Activated CD8-positive, alpha-beta memory T cell treated with anti-CD3 and anti-CD28 coated beads, Interleukin-2, amount 10 ng/mL, durations not matched to agents 7 days and 5 days (primary cell): ENCODE measurements at regions of chr13 and their contacts with region 1.

Region 1: GRCh38 chr13:26971990-26972887 is 199.4 kb downstream of the USP12 start:
- DNase-seq: peak; percentile 57
- ATAC-seq: peak; percentile 78
- H3K4me3 Mint-ChIP-seq: no peak overlapping the region
- H3K27ac Mint-ChIP-seq: no peak overlapping the region
- H3K4me1 Mint-ChIP-seq: peaks cover 5% of the 10 kb centered on the region
- H3K27me3 Mint-ChIP-seq: peaks cover 3% of the 10 kb centered on the region

Region 2: DNA sequence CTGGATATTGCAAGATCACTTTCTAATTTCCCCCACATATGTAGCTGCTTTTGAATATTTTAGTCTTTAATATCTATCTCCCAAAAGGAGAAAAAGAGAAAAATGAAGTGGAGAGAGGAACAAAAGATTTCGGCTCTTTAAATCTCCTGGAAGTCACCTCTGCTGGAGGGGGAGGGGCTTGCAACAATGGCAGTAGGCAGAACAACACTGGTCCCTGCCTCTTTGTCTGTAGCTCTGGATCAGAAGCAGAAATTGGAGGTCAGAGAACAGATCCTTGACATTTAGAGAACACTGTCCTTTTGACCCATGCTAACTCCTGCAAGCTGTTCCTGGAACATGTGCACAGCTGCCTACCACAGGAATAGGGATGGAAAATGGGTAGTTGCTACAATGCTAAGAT is 125.0 kb before region 1 on chr13:
- CTCF ChIA-PET with region 1: no interaction called
- DNase-seq: no peak
- ATAC-seq: no peak
- H3K4me3 Mint-ChIP-seq: no peak overlapping the region
- H3K27ac Mint-ChIP-seq: no peak overlapping the region
- H3K4me1 Mint-ChIP-seq: no peaks in the 10 kb centered on the region
- H3K27me3 Mint-ChIP-seq: peaks cover 28% of the 10 kb centered on the region

Region 3: DNA sequence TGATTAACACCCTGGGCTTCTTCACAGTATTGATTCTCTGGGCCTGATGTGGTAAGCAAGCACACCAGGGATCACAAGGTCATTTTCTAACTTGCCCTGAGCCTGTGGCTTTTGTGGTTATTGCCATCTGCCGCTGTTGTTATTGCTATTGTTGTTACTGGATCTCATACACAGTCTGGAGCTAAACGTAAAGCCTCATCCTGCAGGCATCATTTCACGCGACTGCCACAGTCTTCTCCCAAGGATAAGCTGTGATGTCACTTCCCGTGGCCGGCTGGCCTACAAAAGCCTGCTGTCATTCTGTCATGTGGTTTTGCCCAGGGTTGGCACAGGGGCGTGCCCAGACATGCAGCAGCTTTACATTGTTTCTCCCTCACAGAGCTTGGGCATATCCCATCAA is 57.6 kb before region 1 on chr13:
- CTCF ChIA-PET with region 1: no interaction called
- DNase-seq: peak; percentile 53
- ATAC-seq: peak; percentile 30
- H3K4me3 Mint-ChIP-seq: no peak overlapping the region
- H3K27ac Mint-ChIP-seq: no peak overlapping the region
- H3K4me1 Mint-ChIP-seq: peaks cover 12% of the 10 kb centered on the region
- H3K27me3 Mint-ChIP-seq: peaks cover 22% of the 10 kb centered on the region

Region 4: DNA sequence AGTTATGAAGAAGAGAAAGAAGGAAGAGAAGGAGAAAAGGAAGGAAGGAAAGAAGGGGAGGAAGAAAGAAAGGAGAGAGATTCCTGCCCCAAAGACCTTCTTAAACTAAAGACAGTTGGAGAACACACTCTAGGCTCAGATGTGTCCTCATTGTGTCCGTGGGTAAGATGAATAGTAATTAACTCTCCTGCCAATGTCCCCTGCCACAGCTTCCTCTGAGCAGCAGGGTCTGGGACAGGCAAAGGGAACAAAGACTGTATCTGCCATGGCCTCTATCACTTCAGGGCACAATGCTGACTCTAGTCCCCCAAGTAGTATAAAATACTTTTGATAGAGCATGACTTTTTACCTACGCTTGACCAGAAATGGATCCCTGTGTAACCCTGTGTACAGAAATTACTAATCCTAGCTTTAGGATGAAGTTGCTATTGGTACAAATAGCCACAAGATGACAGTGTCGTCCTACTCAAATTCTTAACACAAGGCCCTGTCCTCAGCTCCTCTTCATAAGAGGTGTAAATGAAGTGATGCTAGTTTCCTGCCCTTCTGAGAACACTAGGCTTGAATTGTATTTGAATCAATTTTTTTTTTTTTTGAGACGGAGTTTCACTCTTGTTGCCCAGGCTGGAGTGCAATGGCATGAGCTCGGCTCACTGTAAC is 25.4 kb before region 1 on chr13:
- CTCF ChIA-PET with region 1: interaction called, 11 read pairs
- DNase-seq: no peak
- ATAC-seq: peak; percentile 78
- H3K4me3 Mint-ChIP-seq: no peak overlapping the region
- H3K27ac Mint-ChIP-seq: no peak overlapping the region
- H3K4me1 Mint-ChIP-seq: peaks cover 9% of the 10 kb centered on the region
- H3K27me3 Mint-ChIP-seq: peaks cover 6% of the 10 kb centered on the region